A673 (cell line): ENCODE measurements at regions of chr21 and their contacts with region 1.

Region 1: DNA sequence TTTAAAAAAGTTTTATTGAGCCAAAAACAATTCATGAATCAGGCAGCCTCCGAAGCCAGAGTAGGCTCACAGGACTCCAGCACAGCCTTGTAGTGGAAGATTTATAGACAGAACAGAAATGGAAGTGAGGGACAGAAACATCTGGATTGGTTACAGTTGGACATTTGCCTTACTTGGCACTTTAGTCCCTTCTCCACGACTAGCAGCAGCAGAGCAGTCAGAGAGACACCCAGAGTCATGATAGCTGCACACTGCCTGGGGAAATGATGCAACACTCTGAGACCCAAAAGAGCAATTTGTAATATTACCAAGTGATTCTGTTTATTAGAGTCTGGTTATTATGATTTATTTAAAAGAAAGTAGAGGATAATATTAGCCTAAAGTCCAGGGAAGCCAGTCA is 72.2 kb upstream of the KRTAP11-1 start:
- DNase-seq: no peak
- H3K4me3 ChIP-seq: no peak overlapping the region
- H3K27ac ChIP-seq: no peak overlapping the region
- H3K4me1 ChIP-seq: no peaks in the 10 kb centered on the region
- H3K27me3 ChIP-seq: no peaks in the 10 kb centered on the region
- CTCF ChIP-seq: no peak

Region 2: GRCh38 chr21:30211071-30211470 is 742.5 kb before region 1 on chr21:
- CTCF ChIA-PET with region 1: no interaction called
- POLR2A ChIA-PET with region 1: no interaction called
- intact Hi-C with region 1: loop called (anchors 5 kb)
- DNase-seq: no peak
- H3K4me3 ChIP-seq: no peak overlapping the region
- H3K27ac ChIP-seq: no peak overlapping the region
- H3K4me1 ChIP-seq: no peaks in the 10 kb centered on the region
- H3K27me3 ChIP-seq: no peaks in the 10 kb centered on the region
- CTCF ChIP-seq: no peak

Region 3: GRCh38 chr21:31030367-31031106 is 76.9 kb after region 1 on chr21:
- CTCF ChIA-PET with region 1: no interaction called
- POLR2A ChIA-PET with region 1: no interaction called
- intact Hi-C with region 1: no loop called
- DNase-seq: no peak
- H3K4me3 ChIP-seq: no peak overlapping the region
- H3K27ac ChIP-seq: no peak overlapping the region
- H3K4me1 ChIP-seq: no peaks in the 10 kb centered on the region
- H3K27me3 ChIP-seq: no peaks in the 10 kb centered on the region
- CTCF ChIP-seq: no peak

Region 4: GRCh38 chr21:31180256-31181081 is 226.9 kb after region 1 on chr21:
- CTCF ChIA-PET with region 1: no interaction called
- POLR2A ChIA-PET with region 1: no interaction called
- intact Hi-C with region 1: no loop called
- DNase-seq: peak; percentile 64
- H3K4me3 ChIP-seq: no peak overlapping the region
- H3K27ac ChIP-seq: no peak overlapping the region
- H3K4me1 ChIP-seq: no peaks in the 10 kb centered on the region
- H3K27me3 ChIP-seq: no peaks in the 10 kb centered on the region
- CTCF ChIP-seq: peak; percentile 69